ENCODE measurements at regions of chr1 and their contacts with region 1.

Region 1: DNA sequence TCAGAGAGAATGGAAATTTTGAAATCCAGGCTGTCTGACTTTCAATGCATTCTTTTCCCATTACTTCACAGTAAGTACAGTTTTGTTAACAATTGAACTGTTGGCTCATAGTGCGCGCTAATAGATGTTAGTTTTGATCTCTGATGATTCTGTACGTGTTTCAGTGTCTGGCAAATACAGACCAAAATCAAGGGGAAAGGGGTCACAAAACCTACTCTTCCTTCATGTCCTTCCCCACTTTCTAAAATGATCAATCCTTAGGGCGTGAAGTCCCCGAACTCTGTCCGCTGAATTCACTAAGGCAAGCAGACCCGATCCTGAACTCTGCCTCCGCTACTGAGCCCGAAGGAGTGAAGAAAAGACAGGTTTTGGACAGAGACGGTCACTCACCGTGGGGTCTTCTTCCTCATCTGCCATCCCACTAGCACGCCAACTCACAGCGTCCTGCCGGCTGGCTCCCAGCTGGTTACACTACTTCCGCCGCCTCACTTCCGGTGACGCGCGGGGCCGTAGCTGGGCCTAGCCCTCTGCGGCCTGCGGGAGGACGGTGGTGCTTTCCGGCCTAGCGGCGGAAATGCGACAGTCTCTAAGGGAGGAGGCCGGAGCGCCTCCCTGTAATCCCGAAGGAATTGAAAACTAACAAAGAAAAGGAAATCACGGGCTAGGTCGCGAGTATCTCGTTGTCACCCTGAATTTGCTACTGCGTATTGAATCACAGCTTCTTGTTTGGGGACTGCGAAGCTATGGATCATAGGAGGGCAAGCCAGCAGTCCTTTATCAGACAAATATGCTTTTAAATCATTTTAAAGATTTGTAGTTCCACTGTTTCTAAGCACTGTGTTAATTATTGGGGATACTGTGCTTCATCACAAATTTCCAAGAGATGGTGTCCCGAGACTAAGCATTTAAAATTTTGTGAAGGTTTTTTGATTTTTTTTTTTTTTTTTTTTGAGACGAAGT is at the start of gene TAF13:
- DNase-seq: peak; percentile 89
- ATAC-seq: peak; percentile 99
- H3K4me3 Mint-ChIP-seq: peak within 1 kb of the TSS; percentile 97
- H3K27ac Mint-ChIP-seq: peak within 1 kb of the TSS; percentile 97
- H3K4me1 Mint-ChIP-seq: peaks cover 8% of the 10 kb centered on the region
- H3K27me3 Mint-ChIP-seq: no peaks in the 10 kb centered on the region
- total RNA-seq, gene TAF13: 17.3 to 19.0 TPM

Region 2: GRCh38 chr1:109011335-109011734 is 64.5 kb before region 1 on chr1:
- POLR2A ChIA-PET with region 1: no interaction called
- DNase-seq: no peak
- ATAC-seq: no peak
- H3K4me3 Mint-ChIP-seq: no peak overlapping the region
- H3K27ac Mint-ChIP-seq: no peak overlapping the region
- H3K4me1 Mint-ChIP-seq: no peaks in the 10 kb centered on the region
- H3K27me3 Mint-ChIP-seq: no peaks in the 10 kb centered on the region

Region 3: DNA sequence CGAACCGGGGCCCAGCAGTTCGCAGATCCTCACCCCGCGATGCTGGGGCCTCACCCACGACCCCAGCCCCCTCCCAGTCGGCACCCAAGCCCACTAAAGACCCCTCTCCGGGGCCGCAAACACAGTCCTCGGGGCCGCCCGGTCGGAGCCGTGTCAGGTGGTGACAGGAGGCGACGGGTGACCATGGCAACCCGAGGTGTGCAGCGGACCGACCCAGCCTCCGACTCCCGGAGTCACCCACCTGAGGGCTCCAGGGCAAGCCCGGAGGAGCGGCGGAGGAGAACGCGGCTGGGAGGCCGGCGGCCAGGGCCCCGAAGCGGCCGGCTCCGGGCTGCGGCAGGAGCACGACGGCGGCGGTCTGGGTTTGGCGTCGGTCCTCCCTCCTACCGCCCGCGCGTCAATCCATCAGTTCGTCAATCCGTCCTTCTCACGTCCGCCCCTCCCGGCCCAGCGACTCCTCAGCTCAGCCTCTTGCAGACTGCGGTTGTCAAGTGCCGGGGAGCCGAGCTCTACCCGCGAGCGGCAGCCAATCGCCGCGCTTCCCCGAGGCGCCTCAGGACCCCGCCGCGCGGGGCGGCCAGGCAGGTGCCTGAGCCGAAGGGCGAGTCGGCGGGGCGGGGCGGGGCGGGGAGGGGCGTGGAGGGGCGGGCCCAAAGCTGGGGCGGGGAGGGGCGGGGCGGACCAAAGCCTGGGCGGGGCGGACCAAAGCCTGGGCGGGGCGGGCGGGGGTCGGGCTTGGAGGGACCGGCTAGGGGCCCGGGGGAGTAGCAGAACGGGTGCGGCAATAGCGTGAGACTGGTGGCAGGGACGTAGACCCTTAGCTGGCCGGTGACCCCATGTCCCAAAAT is 34.0 kb before region 1 on chr1 and contains the start of gene WDR47:
- POLR2A ChIA-PET with region 1: interaction called, 10 read pairs
- DNase-seq: peak; percentile 98
- ATAC-seq: peak; percentile 98
- H3K4me3 Mint-ChIP-seq: peak within 1 kb of the TSS; percentile 93
- H3K27ac Mint-ChIP-seq: peak within 1 kb of the TSS; percentile 90
- H3K4me1 Mint-ChIP-seq: peaks cover 13% of the 10 kb centered on the region
- H3K27me3 Mint-ChIP-seq: no peaks in the 10 kb centered on the region
- total RNA-seq, gene WDR47: 12.4 to 14.7 TPM

Region 4: GRCh38 chr1:109061183-109061582 is 14.6 kb before region 1 on chr1:
- POLR2A ChIA-PET with region 1: no interaction called
- DNase-seq: no peak
- ATAC-seq: no peak
- H3K4me3 Mint-ChIP-seq: no peak overlapping the region
- H3K27ac Mint-ChIP-seq: no peak overlapping the region
- H3K4me1 Mint-ChIP-seq: no peaks in the 10 kb centered on the region
- H3K27me3 Mint-ChIP-seq: no peaks in the 10 kb centered on the region

Region 5: DNA sequence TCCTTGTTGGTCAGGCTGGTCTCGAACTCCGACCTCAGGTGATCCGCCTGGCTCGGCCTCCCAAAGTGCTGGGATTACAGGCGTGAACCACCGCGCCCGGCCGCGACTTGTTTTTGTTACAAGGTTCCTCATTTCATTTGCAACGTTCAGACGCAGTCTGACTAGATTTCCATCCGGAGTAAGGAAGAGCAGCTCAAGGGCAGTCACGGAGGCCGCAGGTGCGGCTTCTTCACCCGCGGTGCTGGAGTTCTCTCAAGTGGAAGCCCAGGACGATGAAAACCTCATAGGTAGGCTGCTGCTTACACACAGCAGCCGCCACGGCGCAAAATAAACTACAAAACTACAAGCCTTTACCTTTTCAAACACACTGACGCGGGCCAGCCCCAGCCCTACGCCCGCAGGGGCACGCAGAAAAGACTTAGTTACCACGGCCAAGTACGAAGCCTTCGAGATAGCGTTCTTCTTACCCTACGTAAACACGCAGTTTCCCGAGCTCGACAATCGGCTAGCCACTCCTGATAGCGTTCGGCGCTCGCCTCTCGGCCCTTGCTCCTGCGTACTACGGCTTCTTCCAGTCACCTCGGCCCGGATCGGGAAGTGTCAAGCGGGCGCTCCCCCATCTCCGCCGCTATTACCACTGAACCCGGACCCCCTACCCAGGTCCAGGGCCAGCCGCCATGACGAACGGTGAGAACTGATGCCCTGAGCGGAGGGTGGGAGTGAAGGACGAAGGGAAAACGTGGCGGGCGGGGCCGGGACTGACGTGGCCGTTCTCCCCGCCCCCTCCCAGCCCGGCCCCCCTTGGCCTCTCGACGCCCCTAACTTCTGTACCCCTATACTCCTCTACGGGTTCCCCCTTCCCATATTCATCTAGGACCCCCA is 14.6 kb after region 1 on chr1 and contains the start of gene TMEM167B:
- POLR2A ChIA-PET with region 1: interaction called, 11 read pairs
- DNase-seq: peak; percentile 88
- ATAC-seq: peak; percentile 92
- H3K4me3 Mint-ChIP-seq: peak within 1 kb of the TSS; percentile 93
- H3K27ac Mint-ChIP-seq: peak within 1 kb of the TSS; percentile 84
- H3K4me1 Mint-ChIP-seq: peaks cover 17% of the 10 kb centered on the region
- H3K27me3 Mint-ChIP-seq: no peaks in the 10 kb centered on the region
- total RNA-seq, gene TMEM167B: 30.9 to 32.5 TPM